ENCODE measurements at regions of chr13 and their contacts with region 1.

Region 1: GRCh38 chr13:26707122-26708006 is 53.2 kb downstream of the GPR12 start:
- DNase-seq: peak; percentile 62
- H3K4me3 Mint-ChIP-seq: no peak overlapping the region
- H3K27ac Mint-ChIP-seq: no peak overlapping the region
- H3K4me1 Mint-ChIP-seq: no peaks in the 10 kb centered on the region
- H3K27me3 Mint-ChIP-seq: peaks cover 30% of the 10 kb centered on the region
- CTCF ChIP-seq: peak; percentile 82

Region 2: GRCh38 chr13:26584713-26585112 is 122.7 kb before region 1 on chr13:
- CTCF ChIA-PET with region 1: no interaction called
- POLR2A ChIA-PET with region 1: no interaction called
- intact Hi-C with region 1: no loop called
- DNase-seq: peak; percentile 2
- H3K4me3 Mint-ChIP-seq: no peak overlapping the region
- H3K27ac Mint-ChIP-seq: no peak overlapping the region
- H3K4me1 Mint-ChIP-seq: peaks cover 10% of the 10 kb centered on the region
- H3K27me3 Mint-ChIP-seq: no peaks in the 10 kb centered on the region
- CTCF ChIP-seq: no peak

Region 3: GRCh38 chr13:26668357-26669146 is 38.8 kb before region 1 on chr13:
- CTCF ChIA-PET with region 1: no interaction called
- POLR2A ChIA-PET with region 1: no interaction called
- intact Hi-C with region 1: no loop called
- DNase-seq: no peak
- H3K4me3 Mint-ChIP-seq: no peak overlapping the region
- H3K27ac Mint-ChIP-seq: no peak overlapping the region
- H3K4me1 Mint-ChIP-seq: peaks cover 7% of the 10 kb centered on the region
- H3K27me3 Mint-ChIP-seq: no peaks in the 10 kb centered on the region
- CTCF ChIP-seq: no peak

Region 4: GRCh38 chr13:26719356-26719945 is 12.1 kb after region 1 on chr13:
- CTCF ChIA-PET with region 1: interaction called, 12 read pairs
- POLR2A ChIA-PET with region 1: no interaction called
- intact Hi-C with region 1: no loop called
- DNase-seq: peak; percentile 15
- H3K4me3 Mint-ChIP-seq: no peak overlapping the region
- H3K27ac Mint-ChIP-seq: no peak overlapping the region
- H3K4me1 Mint-ChIP-seq: no peaks in the 10 kb centered on the region
- H3K27me3 Mint-ChIP-seq: peaks cover 50% of the 10 kb centered on the region
- CTCF ChIP-seq: no peak

Region 5: GRCh38 chr13:26872525-26873385 is 165.4 kb after region 1 on chr13:
- CTCF ChIA-PET with region 1: interaction called, 47 read pairs
- POLR2A ChIA-PET with region 1: interaction called, 6 read pairs
- intact Hi-C with region 1: loop called (anchors 1 kb)
- DNase-seq: peak; percentile 54
- H3K4me3 Mint-ChIP-seq: no peak overlapping the region
- H3K27ac Mint-ChIP-seq: no peak overlapping the region
- H3K4me1 Mint-ChIP-seq: no peaks in the 10 kb centered on the region
- H3K27me3 Mint-ChIP-seq: peaks cover 19% of the 10 kb centered on the region
- CTCF ChIP-seq: peak; percentile 79

Region 6: DNA sequence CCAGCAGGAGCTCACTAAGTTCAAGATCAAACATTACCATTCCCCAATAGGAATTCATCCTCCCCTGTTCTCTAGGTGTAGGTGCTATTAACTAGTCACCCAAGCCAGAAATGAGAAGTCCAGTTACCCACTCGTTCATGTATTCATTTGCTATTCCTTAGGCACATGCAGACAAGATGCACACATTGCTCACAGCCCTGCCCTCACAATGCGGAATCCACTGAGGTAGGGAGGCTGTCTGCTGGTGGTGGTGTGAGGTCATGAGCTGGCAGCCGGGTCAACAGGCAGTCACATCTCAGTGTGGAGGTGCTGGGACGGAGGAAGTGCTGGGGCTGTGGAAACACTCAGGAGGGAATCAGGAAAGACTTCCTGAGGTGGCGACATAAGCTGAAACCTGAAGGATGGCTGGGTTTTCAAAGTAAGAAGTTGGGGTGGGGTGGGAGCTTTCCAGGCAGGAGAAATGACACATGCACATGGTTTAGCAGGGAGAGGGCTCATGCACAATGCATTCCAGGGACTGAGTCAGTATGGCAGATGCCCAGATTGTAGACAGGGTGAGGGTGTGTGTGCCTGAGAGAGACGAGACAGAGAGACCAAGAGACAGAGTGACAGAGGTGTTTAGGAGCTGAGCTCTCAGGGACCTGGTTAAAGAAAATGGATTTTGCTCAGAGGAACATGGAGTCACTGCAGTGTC is 346.7 kb after region 1 on chr13:
- CTCF ChIA-PET with region 1: no interaction called
- POLR2A ChIA-PET with region 1: no interaction called
- intact Hi-C with region 1: no loop called
- DNase-seq: peak; percentile 84
- H3K4me3 Mint-ChIP-seq: no peak overlapping the region
- H3K27ac Mint-ChIP-seq: peak overlapping the region; percentile 53
- H3K4me1 Mint-ChIP-seq: peaks cover 29% of the 10 kb centered on the region
- H3K27me3 Mint-ChIP-seq: no peaks in the 10 kb centered on the region
- CTCF ChIP-seq: no peak